ENCODE measurements at regions of chr21 and their contacts with region 1.

Region 1: GRCh38 chr21:15552914-15553494 is 176.8 kb upstream of the USP25 start:
- DNase-seq: peak in 6 of 9 donors; percentile 13 to 62 (median 48)
- ATAC-seq: peak; percentile 64
- H3K4me3 ChIP-seq: no peak overlapping the region
- H3K4me3 Mint-ChIP-seq: peak overlapping the region in 5 of 10 donors; percentile 25 to 56 (median 33)
- H3K27ac ChIP-seq: no peak overlapping the region
- H3K27ac Mint-ChIP-seq: peak overlapping the region in 5 of 9 donors; percentile 4 to 70 (median 16)
- H3K4me1 ChIP-seq: peaks cover 0 to 9% of the 10 kb centered on the region in 2 donors
- H3K4me1 Mint-ChIP-seq: peaks cover 4 to 23% (median 18%) of the 10 kb centered on the region in 7 donors
- H3K27me3 ChIP-seq: no peaks in the 10 kb centered on the region
- H3K27me3 Mint-ChIP-seq: peaks cover 0 to 4% (median 0%) of the 10 kb centered on the region in 5 donors

Region 2: GRCh38 chr21:14403681-14404318 is 1149.2 kb before region 1 on chr21:
- CTCF ChIA-PET with region 1: no interaction called
- POLR2A ChIA-PET with region 1: no interaction called
- intact Hi-C with region 1: loop called in 1 of 2 experiments (anchors 1 kb)
- DNase-seq: peak in 5 of 9 donors; percentile 19 to 55 (median 39)
- ATAC-seq: peak; percentile 79
- H3K4me3 ChIP-seq: no peak overlapping the region
- H3K4me3 Mint-ChIP-seq: no peak overlapping the region
- H3K27ac ChIP-seq: no peak overlapping the region
- H3K27ac Mint-ChIP-seq: no peak overlapping the region
- H3K4me1 ChIP-seq: no peaks in the 10 kb centered on the region
- H3K4me1 Mint-ChIP-seq: no peaks in the 10 kb centered on the region
- H3K27me3 ChIP-seq: no peaks in the 10 kb centered on the region
- H3K27me3 Mint-ChIP-seq: peaks cover 0 to 1% (median 0%) of the 10 kb centered on the region in 5 donors

Region 3: GRCh38 chr21:14864211-14865021 is 688.6 kb before region 1 on chr21:
- CTCF ChIA-PET with region 1: interaction called, 3 read pairs
- POLR2A ChIA-PET with region 1: no interaction called
- intact Hi-C with region 1: loop called in 1 of 2 experiments (anchors 1 kb)
- DNase-seq: peak in 7 of 9 donors; percentile 13 to 31 (median 24)
- ATAC-seq: peak; percentile 72
- H3K4me3 ChIP-seq: no peak overlapping the region
- H3K4me3 Mint-ChIP-seq: no peak overlapping the region
- H3K27ac ChIP-seq: no peak overlapping the region
- H3K27ac Mint-ChIP-seq: no peak overlapping the region
- H3K4me1 ChIP-seq: no peaks in the 10 kb centered on the region
- H3K4me1 Mint-ChIP-seq: peaks cover 0 to 12% (median 3%) of the 10 kb centered on the region in 7 donors
- H3K27me3 ChIP-seq: no peaks in the 10 kb centered on the region
- H3K27me3 Mint-ChIP-seq: peaks cover 0 to 5% (median 0%) of the 10 kb centered on the region in 5 donors

Region 4: DNA sequence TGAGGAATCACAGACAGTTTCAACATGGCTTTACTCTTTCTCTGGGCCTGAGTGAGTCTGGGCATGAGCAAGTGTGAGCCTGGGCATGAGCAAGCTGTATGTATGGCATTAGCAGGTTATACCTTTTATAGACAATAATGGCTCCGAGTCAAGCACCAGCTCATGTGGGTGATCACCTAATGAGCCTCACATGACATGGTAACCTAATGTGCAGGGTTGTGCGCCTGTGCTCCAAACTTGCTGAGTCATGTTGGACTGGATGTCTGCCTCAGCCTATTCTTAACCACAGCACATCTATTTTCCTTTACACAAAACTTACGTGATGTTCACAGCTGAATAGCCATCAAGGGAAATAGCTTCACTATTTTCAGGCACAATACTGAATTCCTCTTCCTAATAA is 252.0 kb before region 1 on chr21:
- CTCF ChIA-PET with region 1: no interaction called
- POLR2A ChIA-PET with region 1: no interaction called
- intact Hi-C with region 1: loop called in 1 of 2 experiments (anchors 10 kb)
- DNase-seq: peak in 3 of 9 donors; percentile 2 to 16 (median 12)
- ATAC-seq: no peak
- H3K4me3 ChIP-seq: no peak overlapping the region
- H3K4me3 Mint-ChIP-seq: no peak overlapping the region
- H3K27ac ChIP-seq: no peak overlapping the region
- H3K27ac Mint-ChIP-seq: no peak overlapping the region
- H3K4me1 ChIP-seq: no peaks in the 10 kb centered on the region
- H3K4me1 Mint-ChIP-seq: no peaks in the 10 kb centered on the region
- H3K27me3 ChIP-seq: no peaks in the 10 kb centered on the region
- H3K27me3 Mint-ChIP-seq: no peaks in the 10 kb centered on the region

Region 5: GRCh38 chr21:15365751-15366392 is 187.1 kb before region 1 on chr21:
- CTCF ChIA-PET with region 1: no interaction called
- POLR2A ChIA-PET with region 1: no interaction called
- intact Hi-C with region 1: no loop called
- DNase-seq: no peak
- ATAC-seq: no peak
- H3K4me3 ChIP-seq: no peak overlapping the region
- H3K4me3 Mint-ChIP-seq: no peak overlapping the region
- H3K27ac ChIP-seq: no peak overlapping the region
- H3K27ac Mint-ChIP-seq: no peak overlapping the region
- H3K4me1 ChIP-seq: no peaks in the 10 kb centered on the region
- H3K4me1 Mint-ChIP-seq: no peaks in the 10 kb centered on the region
- H3K27me3 ChIP-seq: no peaks in the 10 kb centered on the region
- H3K27me3 Mint-ChIP-seq: no peaks in the 10 kb centered on the region

Region 6: GRCh38 chr21:15520811-15521636 is 32.0 kb before region 1 on chr21:
- CTCF ChIA-PET with region 1: interaction called, 22 read pairs
- POLR2A ChIA-PET with region 1: no interaction called
- intact Hi-C with region 1: loop called in 1 of 2 experiments (anchors 1 kb)
- DNase-seq: peak in 4 of 9 donors; percentile 16 to 25 (median 20)
- ATAC-seq: peak; percentile 34
- H3K4me3 ChIP-seq: no peak overlapping the region
- H3K4me3 Mint-ChIP-seq: peak overlapping the region in 6 of 10 donors; percentile 10 to 50 (median 34)
- H3K27ac ChIP-seq: no peak overlapping the region
- H3K27ac Mint-ChIP-seq: peak overlapping the region in 6 of 9 donors; percentile 15 to 78 (median 70)
- H3K4me1 ChIP-seq: peaks cover 5 to 16% of the 10 kb centered on the region in 2 donors
- H3K4me1 Mint-ChIP-seq: peaks cover 6 to 37% (median 21%) of the 10 kb centered on the region in 7 donors
- H3K27me3 ChIP-seq: no peaks in the 10 kb centered on the region
- H3K27me3 Mint-ChIP-seq: no peaks in the 10 kb centered on the region

Measured in naive thymus-derived CD4-positive, alpha-beta T cell (primary cell).